AG04450 (cell line): ENCODE measurements at regions of chr4 and their contacts with region 1.

Region 1: GRCh38 chr4:83629945-83630721 is 94.2 kb downstream of the GPAT3 start:
- DNase-seq: peak; percentile 71
- H3K4me3 ChIP-seq: no peak overlapping the region
- H3K27ac ChIP-seq: peak overlapping the region; percentile 71
- H3K27me3 ChIP-seq: no peaks in the 10 kb centered on the region
- CTCF ChIP-seq: no peak

Region 2: GRCh38 chr4:83516042-83516772 is 113.9 kb before region 1 on chr4:
- CTCF ChIA-PET with region 1: interaction called, 10 read pairs
- POLR2A ChIA-PET with region 1: interaction called, 8 read pairs
- DNase-seq: peak; percentile 26
- H3K4me3 ChIP-seq: no peak overlapping the region
- H3K27ac ChIP-seq: peak overlapping the region; percentile 21
- H3K27me3 ChIP-seq: no peaks in the 10 kb centered on the region
- CTCF ChIP-seq: no peak

Region 3: GRCh38 chr4:83535520-83536361 is 94.4 kb before region 1 on chr4 and contains the start of gene GPAT3:
- CTCF ChIA-PET with region 1: interaction called, 3 read pairs
- POLR2A ChIA-PET with region 1: interaction called, 21 read pairs
- DNase-seq: peak; percentile 65
- H3K4me3 ChIP-seq: peak within 1 kb of the TSS; percentile 89
- H3K27ac ChIP-seq: peak within 1 kb of the TSS; percentile 72
- H3K27me3 ChIP-seq: peaks cover 10% of the 10 kb centered on the region
- CTCF ChIP-seq: no peak
- polyA plus RNA-seq, gene GPAT3: 11.6 and 15.0 TPM in 2 replicates

Region 4: DNA sequence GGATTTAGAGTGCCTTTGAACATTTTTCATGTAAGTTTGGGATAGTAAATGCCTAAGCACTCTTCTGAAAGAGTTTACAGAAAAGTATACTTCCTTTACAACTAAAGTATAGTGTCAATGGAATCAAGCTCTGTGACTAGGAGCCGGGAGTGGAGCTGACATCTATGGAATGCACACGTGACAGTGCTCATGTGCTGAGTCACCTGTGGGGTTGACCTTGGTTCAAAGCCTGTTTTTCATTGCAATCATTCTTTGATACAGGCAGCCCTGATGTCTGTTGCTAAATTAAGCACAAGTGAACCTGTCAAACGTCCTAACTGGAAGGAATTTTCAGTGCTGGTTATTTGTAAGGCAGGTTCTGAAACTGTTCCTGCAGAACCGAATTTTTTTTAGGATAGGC is 11.7 kb before region 1 on chr4:
- CTCF ChIA-PET with region 1: no interaction called
- POLR2A ChIA-PET with region 1: interaction called, 34 read pairs
- DNase-seq: peak; percentile 66
- H3K4me3 ChIP-seq: no peak overlapping the region
- H3K27ac ChIP-seq: no peak overlapping the region
- H3K27me3 ChIP-seq: no peaks in the 10 kb centered on the region
- CTCF ChIP-seq: no peak

Region 5: GRCh38 chr4:83677656-83678055 is 47.5 kb after region 1 on chr4:
- CTCF ChIA-PET with region 1: no interaction called
- POLR2A ChIA-PET with region 1: no interaction called
- DNase-seq: no peak
- H3K4me3 ChIP-seq: no peak overlapping the region
- H3K27ac ChIP-seq: no peak overlapping the region
- H3K27me3 ChIP-seq: peaks cover 2% of the 10 kb centered on the region
- CTCF ChIP-seq: no peak